ENCODE measurements at regions of chr11 and their contacts with region 1.

Region 1: DNA sequence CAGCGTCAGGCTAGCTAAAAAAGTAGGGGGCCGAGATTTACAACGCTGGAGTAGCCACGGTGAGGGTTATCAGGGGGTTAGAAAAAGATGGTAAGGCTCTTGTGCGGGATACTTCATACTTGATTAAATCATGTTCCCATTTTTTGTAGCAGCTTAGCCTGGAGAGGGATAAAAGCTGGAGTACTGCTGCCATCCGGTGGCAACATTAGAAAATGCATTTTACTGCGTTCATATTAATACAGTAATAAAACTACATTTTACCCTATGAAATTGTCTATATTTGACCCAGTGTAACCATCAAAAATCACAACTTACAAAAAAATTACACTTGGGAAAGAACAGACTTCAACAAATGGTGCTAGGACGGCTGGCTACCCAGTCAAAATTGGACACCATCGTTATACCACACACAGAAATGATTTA is 17.3 kb downstream of the RPUSD4 start:
- H3K4me3 Mint-ChIP-seq: no peak overlapping the region
- H3K27ac Mint-ChIP-seq: no peak overlapping the region
- H3K4me1 Mint-ChIP-seq: peaks cover 10% of the 10 kb centered on the region
- H3K27me3 Mint-ChIP-seq: no peaks in the 10 kb centered on the region

Region 2: GRCh38 chr11:125923012-125923579 is 271.0 kb before region 1 on chr11:
- intact Hi-C with region 1: loop called (anchors 1 kb)
- H3K4me3 Mint-ChIP-seq: no peak overlapping the region
- H3K27ac Mint-ChIP-seq: no peak overlapping the region
- H3K4me1 Mint-ChIP-seq: no peaks in the 10 kb centered on the region
- H3K27me3 Mint-ChIP-seq: peaks cover 6% of the 10 kb centered on the region

Region 3: DNA sequence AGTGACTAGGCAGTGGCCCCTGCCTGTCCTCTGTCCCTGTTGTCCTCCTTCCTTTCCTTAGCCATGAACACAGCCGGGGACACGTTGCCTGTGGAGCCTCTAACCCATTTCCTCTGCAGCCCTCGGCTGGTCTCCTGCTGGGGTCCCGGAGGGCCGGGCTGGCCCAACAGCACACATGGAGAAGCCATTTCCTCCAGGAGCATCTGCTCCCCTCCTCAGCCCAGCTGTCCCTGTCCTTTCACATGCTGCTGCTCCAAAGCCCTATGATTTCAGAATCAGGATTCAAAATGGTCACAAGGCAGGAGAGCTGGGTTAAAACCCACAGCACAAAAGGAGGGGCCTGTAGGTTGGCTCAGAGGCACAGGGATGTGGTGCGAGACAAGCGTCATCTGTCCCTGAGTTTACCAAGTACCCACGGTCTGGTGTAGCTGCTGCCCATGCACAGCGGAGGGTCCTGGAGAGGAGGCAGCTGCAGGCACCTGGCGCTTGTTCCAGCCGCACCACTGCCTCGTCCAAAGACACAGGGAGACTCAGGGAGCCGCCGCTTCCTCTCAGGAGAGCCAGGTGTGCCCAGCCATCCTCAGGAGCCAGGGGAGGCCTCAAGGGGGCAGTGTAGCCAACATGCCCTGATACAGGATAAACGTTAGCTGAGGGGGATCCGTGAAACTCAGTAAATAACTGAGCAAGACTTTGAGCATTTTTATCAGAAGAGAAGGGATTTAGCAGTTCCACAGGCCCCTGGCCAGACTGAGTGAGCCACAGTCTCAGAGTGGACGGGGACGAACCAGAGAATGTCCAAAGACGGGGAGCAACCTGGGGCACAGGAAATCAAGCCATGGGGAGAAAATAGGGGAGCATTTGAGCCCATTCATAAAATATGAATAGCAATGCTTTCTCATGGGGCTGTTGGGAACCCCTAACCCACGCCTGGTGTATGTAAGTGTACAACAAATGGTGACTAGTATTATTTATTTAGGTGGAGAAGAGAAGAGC is 252.2 kb before region 1 on chr11:
- intact Hi-C with region 1: loop called (anchors 5 kb)
- H3K4me3 Mint-ChIP-seq: no peak overlapping the region
- H3K27ac Mint-ChIP-seq: no peak overlapping the region
- H3K4me1 Mint-ChIP-seq: no peaks in the 10 kb centered on the region
- H3K27me3 Mint-ChIP-seq: peaks cover 3% of the 10 kb centered on the region

Region 4: GRCh38 chr11:126132319-126132718 is 61.8 kb before region 1 on chr11:
- intact Hi-C with region 1: no loop called
- H3K4me3 Mint-ChIP-seq: no peak overlapping the region
- H3K27ac Mint-ChIP-seq: no peak overlapping the region
- H3K4me1 Mint-ChIP-seq: no peaks in the 10 kb centered on the region
- H3K27me3 Mint-ChIP-seq: peaks cover 1% of the 10 kb centered on the region

Measured in dendritic cell treated with granulocyte-macrophage colony-stimulating factor and Interleukin-4, amounts not matched to agents 40 ng/mL and 50 ng/mL, for 4 days (primary cell).